AG04449 (cell line): ENCODE measurements at regions of chr16 and their contacts with region 1.

Region 1: GRCh38 chr16:29700253-29700987 is 21.4 kb downstream of the QPRT start:
- DNase-seq: peak; percentile 28
- H3K4me3 ChIP-seq: no peak overlapping the region
- CTCF ChIP-seq: peak; percentile 83

Region 2: DNA sequence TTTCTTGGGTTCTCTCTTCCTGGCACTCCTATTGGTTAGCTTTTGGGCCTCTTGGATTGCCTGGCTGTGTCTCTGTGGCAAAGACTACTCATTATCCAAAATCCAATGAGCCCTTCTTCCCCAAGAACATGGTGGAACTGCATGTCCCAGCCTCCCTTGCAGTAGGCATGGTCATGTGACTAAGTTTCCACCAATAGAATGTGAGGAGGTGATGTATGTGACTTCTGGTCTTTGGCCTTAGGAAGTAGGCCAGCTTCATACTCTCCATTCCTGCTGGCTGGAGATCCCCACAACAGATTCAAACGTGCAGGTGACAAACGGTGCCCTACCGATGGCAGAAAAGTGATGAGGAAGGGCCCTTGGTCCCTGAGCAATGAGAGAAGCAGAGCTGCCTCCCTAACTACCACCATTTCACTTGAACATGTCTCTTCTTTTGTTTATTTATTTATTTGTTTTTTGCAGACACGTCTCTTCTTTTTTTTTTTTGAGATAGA is 54.7 kb before region 1 on chr16:
- CTCF ChIA-PET with region 1: no interaction called
- POLR2A ChIA-PET with region 1: no interaction called
- DNase-seq: no peak
- H3K4me3 ChIP-seq: no peak overlapping the region
- CTCF ChIP-seq: no peak

Region 3: GRCh38 chr16:29710227-29711219 is 10.1 kb after region 1 on chr16:
- CTCF ChIA-PET with region 1: interaction called, 124 read pairs
- POLR2A ChIA-PET with region 1: interaction called, 3 read pairs
- DNase-seq: peak; percentile 19
- H3K4me3 ChIP-seq: no peak overlapping the region
- CTCF ChIP-seq: peak; percentile 54

Region 4: DNA sequence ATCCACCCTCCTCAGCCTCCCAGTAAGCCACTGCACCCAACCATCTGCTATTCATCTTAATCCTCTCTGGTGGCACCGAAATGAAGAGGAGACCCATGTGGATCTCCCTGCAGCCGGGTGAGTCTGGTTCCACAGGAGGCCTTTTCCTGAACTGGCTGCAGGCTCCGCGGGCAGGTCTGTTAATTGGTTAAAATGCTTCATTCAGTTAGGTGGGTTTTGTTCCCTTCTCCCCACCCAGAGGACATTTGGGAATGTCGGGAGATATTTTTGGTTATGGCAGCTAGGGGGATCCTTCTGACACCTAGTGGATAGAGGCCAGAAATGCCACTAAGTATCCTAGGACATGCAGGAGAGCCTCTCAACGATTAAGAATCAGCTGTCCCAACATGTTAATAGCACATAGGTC is 28.7 kb after region 1 on chr16:
- CTCF ChIA-PET with region 1: interaction called, 50 read pairs
- POLR2A ChIA-PET with region 1: no interaction called
- DNase-seq: no peak
- H3K4me3 ChIP-seq: 0 out of 2 replicates have a peak overlapping the region, but pooled peaks have one; percentile 6
- CTCF ChIP-seq: peak; percentile 62

Region 5: DNA sequence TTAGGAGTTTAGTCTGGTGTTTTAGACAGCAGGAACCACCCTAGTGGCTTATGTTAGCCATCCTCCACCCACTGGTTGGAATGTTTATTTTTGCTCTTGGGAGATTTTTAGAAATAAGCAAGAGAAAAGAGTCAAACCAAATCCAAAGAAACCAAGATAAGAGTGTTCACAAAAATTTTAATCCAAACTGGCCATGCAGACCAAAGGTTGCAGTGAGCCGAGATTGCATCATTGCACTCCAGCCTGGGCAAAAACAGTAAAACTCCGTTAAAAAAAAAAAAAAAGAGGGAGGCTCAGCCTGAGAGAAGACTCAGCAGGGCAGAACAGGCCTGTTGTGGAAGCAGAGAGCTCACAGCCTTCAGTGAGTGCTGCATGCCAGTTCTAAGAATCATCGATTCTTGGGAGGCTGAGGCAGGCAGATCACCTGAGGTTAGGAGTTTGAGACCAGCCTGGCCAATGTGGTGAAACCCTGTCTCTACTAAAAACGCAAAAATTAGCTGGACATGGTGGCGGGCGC is 57.6 kb after region 1 on chr16:
- CTCF ChIA-PET with region 1: no interaction called
- POLR2A ChIA-PET with region 1: no interaction called
- DNase-seq: peak; percentile 7
- H3K4me3 ChIP-seq: no peak overlapping the region
- CTCF ChIP-seq: no peak

Region 6: GRCh38 chr16:29790183-29790952 is 89.9 kb after region 1 on chr16 and contains the start of gene KIF22:
- CTCF ChIA-PET with region 1: interaction called, 14 read pairs
- POLR2A ChIA-PET with region 1: no interaction called
- DNase-seq: peak; percentile 89
- H3K4me3 ChIP-seq: peak within 1 kb of the TSS; percentile 96
- CTCF ChIP-seq: peak; percentile 87

Region 7: GRCh38 chr16:30032083-30032819 is 331.8 kb after region 1 on chr16:
- CTCF ChIA-PET with region 1: interaction called, 41 read pairs
- POLR2A ChIA-PET with region 1: no interaction called
- DNase-seq: no peak
- H3K4me3 ChIP-seq: no peak overlapping the region
- CTCF ChIP-seq: peak; percentile 77